ENCODE measurements at regions of chr16 and their contacts with region 1.

Region 1: DNA sequence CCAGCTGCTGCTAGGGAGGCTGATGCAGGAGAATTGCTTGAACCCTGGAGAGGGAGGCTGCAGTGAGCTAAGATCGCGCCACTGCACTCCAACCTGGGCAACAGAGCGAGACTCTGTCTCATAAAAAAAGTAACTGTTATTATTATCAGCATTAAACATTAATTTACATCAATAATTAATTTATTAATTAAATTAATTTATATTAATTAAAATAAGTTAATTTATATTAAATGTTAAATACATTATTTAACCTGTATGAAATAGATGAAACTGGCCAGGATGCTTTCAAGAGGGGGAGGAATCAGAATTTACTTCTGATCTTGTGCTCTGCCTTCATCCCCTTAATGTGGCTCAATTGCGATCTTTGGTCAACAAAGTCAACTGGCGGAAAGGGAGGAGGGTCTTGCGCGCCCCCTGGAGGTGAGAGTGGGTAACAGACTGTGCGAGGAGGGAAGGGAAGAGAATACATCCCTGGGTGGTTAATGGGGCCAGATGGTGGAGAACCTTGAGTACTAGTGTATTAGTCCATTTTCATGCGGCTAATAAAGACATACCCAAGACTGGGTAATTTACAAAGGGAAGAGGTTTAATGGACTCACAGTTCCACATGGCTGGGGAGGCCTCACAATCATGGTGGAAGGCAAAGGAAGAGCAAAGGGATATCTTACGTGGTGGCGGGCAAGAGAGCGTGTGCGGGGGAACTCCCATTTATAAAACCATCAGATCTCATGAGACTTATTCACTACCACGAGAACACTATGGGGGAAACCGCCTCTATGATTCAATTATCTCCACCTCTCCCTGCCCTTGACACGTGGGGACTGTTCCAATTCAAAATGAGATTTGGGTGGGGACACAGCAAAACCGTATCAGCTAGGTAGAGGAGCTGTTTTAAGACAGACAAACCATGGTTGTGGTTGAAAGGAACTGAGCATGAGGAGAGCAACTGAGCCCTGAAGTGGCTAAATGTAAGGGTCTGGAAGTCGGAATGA is 15.7 kb upstream of the CPPED1 start:
- DNase-seq: peak; percentile 79
- ATAC-seq: peak; percentile 75

Region 2: DNA sequence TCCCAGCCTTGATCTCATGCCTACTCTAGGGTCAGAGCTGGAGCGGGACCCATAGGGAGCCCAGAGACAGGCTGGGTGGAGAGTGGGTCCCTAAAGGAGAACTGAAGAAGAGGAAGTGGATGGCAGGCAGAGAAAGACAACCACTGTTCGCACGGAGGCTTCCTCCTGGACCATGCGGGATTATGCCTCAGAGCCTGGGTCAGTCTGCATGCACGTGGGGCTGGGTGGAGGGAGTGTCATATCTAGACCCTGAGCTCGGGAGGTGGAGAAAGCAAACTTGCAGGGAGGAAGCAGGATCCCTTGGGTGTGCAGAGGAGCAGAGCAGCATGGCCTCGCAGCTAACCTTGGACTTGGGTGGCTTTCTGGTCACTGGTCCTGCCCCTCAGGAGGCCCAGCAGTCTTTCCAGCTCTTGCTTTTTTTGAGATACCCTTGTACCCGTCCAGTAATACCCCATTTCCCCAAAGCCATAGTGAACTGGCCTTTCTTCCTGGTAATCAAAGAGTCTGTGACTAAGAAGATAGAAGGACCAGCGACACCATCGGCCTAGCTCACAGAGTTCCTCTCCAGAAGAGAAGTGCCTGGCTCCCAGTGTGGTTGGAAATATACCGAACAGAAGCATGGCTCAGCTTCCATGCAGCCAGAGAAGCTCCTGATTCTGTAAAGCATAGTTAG is 359.9 kb before region 1 on chr16:
- intact Hi-C with region 1: loop called (anchors 5 kb)
- DNase-seq: peak; percentile 72
- ATAC-seq: peak; percentile 67

Region 3: DNA sequence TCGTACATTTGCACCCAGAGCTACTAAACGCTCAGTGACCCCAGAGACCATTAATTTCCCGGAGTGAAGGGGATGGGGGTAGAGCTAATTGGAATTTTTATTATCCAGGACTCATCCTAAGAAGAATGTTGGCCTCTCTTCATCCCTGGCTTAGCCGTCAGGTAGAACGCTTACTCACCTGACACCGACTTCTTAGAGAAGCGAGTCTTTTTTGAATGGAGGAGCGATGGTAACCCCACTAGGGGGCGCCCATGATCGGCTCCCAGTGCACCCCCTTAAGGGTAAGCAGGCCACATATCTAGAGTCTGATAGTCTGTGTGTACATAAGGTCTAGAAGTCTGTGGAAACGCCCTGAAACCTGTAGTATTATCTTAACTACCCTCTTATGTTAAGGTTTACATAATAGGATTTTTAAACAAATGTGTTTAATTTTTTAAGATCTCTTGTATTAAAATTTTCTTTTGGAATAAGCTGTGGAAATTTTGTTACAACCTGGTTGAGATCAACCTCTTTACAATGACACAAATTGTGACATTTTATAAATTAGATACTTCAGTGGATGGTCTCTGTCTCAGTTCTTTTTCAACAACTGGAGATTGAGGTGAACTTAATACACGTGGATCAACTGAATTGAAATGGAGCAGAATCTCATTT is 245.6 kb before region 1 on chr16:
- intact Hi-C with region 1: loop called (anchors 5 kb)
- DNase-seq: peak; percentile 59
- ATAC-seq: peak; percentile 31

Region 4: GRCh38 chr16:12874186-12874585 is 54.8 kb after region 1 on chr16:
- intact Hi-C with region 1: no loop called
- DNase-seq: no peak
- ATAC-seq: no peak

Measured in Right ventricle myocardium superior (tissue), 1 donor.